GM18951 (cell line): ENCODE measurements at regions of chr5 and their contacts with region 1.

Region 1: GRCh38 chr5:149667084-149667828 is 62.9 kb upstream of the PPARGC1B start:
- POLR2A ChIP-seq: no peak

Region 2: DNA sequence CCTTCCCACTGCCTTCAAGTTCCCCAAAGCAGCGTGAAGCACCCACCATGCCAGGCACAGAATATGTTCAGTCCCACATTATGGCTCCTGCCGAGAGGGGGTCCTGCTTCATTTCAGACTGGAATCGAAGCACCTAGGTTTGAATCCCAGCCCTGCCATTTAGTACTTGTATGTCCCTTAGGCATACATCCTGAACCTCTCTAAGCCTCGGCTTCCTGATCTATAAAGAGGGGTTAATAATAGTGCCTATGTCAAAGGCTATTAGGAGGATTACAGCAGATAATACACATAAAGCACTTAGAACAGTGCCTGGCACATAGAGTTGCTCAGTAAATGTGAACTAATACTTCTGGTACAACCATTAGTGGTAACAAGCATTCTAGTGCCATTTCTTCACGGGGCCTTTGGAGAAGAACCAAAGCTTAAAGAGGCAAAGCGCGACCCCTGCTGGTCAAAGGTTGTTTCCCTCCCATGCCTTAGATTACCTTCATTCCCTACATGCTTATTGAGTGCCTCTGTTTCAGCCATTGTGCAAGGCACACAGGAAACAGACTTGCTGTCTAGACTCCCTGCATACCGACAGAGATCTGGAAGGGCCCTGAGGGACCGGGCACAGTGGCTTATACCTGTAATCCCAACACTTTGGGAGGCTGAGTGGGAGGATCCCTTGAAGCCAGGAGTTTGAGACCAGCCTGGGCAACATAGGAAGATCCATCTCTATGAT is 161.1 kb after region 1 on chr5:
- in situ Hi-C with region 1: loop called (anchors 10 kb)
- POLR2A ChIP-seq: no peak